ENCODE measurements at regions of chr3 and their contacts with region 1.

Region 1: GRCh38 chr3:62558549-62559112 is 185.3 kb upstream of the FEZF2 start:
- DNase-seq: no peak
- H3K4me3 ChIP-seq: no peak overlapping the region
- CTCF ChIP-seq: peak; percentile 39

Region 2: GRCh38 chr3:62003828-62004459 is 554.7 kb before region 1 on chr3:
- CTCF ChIA-PET with region 1: no interaction called
- POLR2A ChIA-PET with region 1: no interaction called
- DNase-seq: no peak
- H3K4me3 ChIP-seq: no peak overlapping the region
- CTCF ChIP-seq: no peak

Region 3: DNA sequence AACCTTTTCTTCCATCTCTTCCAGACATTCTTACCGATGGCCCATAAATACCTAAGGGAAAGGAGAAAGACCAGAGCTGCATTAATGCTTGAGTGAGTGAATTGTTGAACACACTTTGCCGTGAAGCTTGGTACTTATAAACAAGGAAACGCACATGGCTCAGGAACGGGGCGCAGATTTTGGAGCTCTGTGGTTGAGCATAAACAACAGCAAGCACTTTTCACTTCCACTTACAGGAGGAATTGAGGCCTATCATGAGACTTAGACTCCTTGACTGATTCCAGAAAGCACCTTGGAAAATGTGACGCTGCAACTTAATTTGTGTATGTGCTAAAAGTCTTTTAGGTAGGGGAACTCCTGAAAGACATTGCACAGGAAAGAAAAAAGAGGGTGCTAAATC is 12.3 kb after region 1 on chr3:
- CTCF ChIA-PET with region 1: interaction called, 21 read pairs
- POLR2A ChIA-PET with region 1: no interaction called
- DNase-seq: no peak
- H3K4me3 ChIP-seq: no peak overlapping the region
- CTCF ChIP-seq: no peak

Region 4: DNA sequence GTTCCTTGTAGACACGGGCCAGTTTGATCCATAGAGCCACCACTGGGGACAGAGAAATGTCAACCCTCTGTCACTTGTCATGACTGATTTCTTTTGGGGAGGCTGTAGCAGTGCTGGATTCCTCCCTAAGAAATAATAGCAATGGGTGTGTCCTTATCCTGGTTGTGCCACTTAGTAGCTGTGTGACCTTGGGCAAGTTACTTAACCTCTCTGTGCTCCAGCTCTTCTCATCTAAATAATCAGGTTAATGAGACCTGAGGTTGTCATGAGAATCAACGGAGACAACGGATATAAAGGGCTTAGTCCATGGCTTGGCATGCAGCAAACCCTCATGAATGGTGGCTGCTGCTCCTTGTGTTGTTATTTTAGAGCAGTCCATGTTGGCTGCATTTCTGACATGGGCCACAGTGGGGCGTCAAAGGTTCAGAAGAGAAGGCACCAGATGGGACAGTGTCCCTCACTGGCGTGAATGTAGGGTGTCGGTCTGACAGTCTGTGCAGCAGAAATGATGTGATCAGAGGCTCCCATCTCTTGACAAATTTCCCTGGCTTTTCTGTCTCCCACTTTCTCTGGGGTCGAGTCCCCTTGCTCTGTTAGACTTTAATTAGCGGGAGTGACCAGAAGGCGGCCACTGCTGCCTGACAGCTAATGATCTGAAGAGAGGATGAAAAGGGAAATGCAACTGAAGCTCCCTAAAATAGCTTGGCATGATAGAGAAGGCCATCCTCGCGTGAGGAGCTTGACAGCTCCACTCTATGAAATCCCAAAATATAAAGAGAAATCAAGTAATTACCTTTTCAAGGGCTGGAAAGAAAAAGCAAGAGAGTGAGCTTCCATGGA is 107.2 kb after region 1 on chr3:
- CTCF ChIA-PET with region 1: no interaction called
- POLR2A ChIA-PET with region 1: no interaction called
- DNase-seq: no peak
- H3K4me3 ChIP-seq: no peak overlapping the region
- CTCF ChIP-seq: peak; percentile 51